ENCODE measurements at regions of chr3 and their contacts with region 1.

Region 1: DNA sequence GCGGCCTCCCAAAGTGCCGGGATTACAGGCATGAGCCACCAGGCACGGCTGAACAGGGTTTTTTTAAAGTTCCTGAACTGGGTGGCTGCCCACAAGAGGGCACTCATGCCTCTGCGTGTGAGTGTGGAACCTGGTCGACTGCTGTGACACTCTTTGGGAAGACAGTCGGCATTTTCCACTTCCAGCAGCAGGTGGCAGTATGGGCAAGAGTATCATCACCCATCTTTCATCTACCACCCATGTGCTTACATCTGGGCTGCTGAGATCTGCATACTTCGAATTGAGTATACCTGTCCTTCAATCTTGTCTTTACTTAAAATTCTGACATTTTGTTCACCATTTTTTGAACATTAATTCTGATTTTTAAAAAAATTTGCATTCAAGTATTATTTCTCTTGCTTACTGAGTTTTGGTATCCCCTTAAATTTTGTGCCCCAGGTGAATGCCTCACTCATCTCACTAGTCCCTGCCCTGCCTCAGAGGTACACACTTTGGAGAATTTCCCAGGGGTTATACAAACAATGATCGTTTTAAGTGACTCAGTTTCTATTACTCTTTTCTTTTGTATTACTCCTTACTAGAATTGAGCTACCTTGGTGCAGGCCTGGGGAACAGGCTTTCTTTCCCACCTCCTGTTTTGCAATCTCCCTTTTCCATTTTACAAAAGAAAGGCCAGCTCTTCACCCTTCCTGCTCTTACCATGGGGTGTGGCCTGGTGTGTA is 11.8 kb downstream of the CLEC3B start:
- DNase-seq: peak; percentile 92
- H3K4me3 ChIP-seq: no peak overlapping the region
- H3K27ac ChIP-seq: peak overlapping the region; percentile 33
- H3K4me1 ChIP-seq: peaks cover 21% of the 10 kb centered on the region
- H3K27me3 ChIP-seq: no peaks in the 10 kb centered on the region
- CTCF ChIP-seq: peak; percentile 98

Region 2: DNA sequence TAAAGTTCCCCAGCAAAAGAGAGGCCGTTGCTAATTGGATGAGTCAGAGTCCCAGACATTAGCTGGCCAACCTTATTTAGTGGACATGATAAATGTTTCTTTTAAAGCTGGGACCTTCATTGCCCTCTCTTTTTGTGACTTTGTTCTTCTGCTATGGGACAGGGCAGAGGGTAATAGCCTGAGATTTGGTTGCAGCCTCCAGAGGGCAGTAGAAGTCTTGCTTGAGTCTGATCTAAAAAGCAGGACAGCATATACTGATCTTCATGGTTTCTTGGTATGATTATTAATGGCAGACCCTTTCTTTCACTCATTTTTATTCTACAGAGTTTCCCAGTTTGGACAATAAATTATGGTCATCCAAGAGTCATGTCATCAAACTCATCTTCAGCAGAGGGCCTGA is 508.0 kb before region 1 on chr3:
- CTCF ChIA-PET with region 1: no interaction called
- dilution Hi-C with region 1: no loop called
- in situ Hi-C with region 1: no loop called
- intact Hi-C with region 1: loop called (anchors 1 kb)
- DNase-seq: no peak
- H3K4me3 ChIP-seq: no peak overlapping the region
- H3K27ac ChIP-seq: no peak overlapping the region
- H3K4me1 ChIP-seq: no peaks in the 10 kb centered on the region
- H3K27me3 ChIP-seq: no peaks in the 10 kb centered on the region
- CTCF ChIP-seq: peak; percentile 33 to 36

Region 3: DNA sequence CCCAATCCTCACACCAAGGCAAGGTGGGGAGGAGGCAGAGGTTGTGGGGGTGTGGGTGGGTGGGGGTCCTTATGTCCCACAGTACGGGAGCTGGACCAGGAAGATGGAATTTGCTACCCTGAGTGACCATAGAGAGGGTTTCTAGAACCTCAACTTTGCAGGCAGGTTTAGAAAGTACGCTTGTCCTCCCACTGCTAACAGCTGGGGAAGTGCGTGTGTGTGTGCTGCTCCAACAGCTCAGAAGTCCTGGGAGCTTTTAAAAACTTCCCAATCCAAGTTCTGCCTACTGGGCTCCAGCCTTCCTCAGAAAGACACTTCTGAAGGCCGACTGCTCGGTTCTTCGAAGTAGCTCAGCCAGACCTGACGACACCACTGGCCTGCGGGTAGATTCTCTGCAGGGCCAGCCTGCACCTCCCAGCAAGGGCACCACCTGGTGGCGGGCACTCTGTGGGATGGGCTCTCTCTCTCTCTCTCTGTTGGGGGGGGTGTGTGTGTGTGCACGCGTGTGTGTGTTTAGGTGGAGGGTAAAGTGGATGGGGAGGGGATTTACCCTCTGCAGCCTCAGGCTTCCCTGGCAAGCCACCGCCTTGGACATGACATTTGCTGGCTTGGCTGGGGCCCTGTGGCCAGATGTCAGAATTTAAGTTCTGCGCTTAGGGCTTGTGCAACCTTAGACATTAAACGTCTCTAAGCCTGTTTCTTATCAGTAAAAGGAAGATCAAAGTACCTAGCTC is 172.6 kb after region 1 on chr3:
- CTCF ChIA-PET with region 1: interaction called, 14 read pairs
- dilution Hi-C with region 1: loop called (anchors 5 kb)
- in situ Hi-C with region 1: loop called in 1 of 2 experiments (anchors 5 kb)
- intact Hi-C with region 1: loop called (anchors 1 kb)
- DNase-seq: peak; percentile 71
- H3K4me3 ChIP-seq: no peak overlapping the region
- H3K27ac ChIP-seq: no peak overlapping the region
- H3K4me1 ChIP-seq: peaks cover 36% of the 10 kb centered on the region
- H3K27me3 ChIP-seq: no peaks in the 10 kb centered on the region
- CTCF ChIP-seq: peak; percentile 69 to 98

Region 4: DNA sequence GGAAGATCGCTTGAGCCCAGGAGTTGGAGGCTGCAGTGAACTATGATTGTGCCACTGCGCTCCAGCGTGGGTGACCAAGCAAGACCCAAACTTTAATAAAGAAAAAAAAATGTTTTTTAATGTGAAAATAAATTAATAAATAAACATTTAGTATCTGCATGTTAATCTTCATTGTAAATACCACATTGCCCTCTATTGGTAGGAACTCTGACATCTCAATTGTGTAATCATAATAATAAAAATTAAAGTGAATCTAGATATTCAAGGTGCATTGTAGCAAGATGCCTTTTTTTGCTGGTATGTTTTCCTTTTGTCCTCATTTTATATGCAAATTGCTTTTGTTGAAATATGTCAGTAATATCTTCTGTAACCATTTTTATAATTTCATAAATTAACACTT is 461.6 kb after region 1 on chr3:
- CTCF ChIA-PET with region 1: no interaction called
- dilution Hi-C with region 1: no loop called
- in situ Hi-C with region 1: loop called (anchors 5 kb)
- intact Hi-C with region 1: loop called (anchors 1 kb)
- DNase-seq: peak; percentile 30
- H3K4me3 ChIP-seq: no peak overlapping the region
- H3K27ac ChIP-seq: no peak overlapping the region
- H3K4me1 ChIP-seq: no peaks in the 10 kb centered on the region
- H3K27me3 ChIP-seq: no peaks in the 10 kb centered on the region
- CTCF ChIP-seq: peak; percentile 51 to 53

Region 5: DNA sequence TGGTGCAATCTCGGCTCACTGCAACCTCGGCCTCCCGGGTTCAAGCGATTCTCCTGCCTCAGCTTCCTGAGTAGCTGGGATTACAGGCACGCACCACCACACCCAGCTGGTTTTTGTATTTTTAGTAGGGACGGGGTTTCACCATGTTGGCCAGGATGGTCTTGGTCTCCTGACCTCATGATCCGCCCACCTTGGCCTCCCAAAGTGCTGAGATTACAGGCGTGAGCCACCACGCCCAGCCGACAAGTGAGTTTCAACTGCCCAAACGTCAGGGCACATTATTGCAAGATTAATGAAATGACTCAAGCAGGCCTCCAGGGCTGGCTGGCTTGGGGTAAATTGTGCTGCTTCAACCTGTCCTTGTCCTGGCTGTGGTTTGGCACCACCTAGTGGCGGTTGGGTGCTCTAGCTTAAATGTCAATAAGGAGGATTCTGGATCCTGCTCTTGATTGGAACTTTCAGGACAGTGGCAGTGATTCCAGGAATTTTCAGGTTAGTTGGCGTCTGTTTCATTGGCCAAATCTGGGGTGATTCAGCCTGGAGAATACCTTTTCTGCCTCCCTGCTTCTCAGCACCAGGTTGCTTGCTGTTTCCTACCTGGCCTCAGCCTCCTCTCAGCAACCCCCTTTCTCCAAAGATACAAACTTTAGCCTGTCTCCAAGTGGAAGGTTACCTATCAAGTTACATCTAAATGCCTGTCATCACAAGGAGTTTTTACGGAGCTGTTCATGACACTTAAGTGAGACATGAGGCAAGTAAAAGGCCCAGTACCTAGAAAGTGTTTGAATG is 618.9 kb after region 1 on chr3:
- CTCF ChIA-PET with region 1: no interaction called
- dilution Hi-C with region 1: no loop called
- in situ Hi-C with region 1: loop called (anchors 10 to 25 kb)
- intact Hi-C with region 1: loop called (anchors 1 kb)
- DNase-seq: peak; percentile 91
- H3K4me3 ChIP-seq: no peak overlapping the region
- H3K27ac ChIP-seq: no peak overlapping the region
- H3K4me1 ChIP-seq: peaks cover 9% of the 10 kb centered on the region
- H3K27me3 ChIP-seq: no peaks in the 10 kb centered on the region
- CTCF ChIP-seq: peak; percentile 90 to 97

Region 6: GRCh38 chr3:45938864-45939263 is 901.0 kb after region 1 on chr3:
- CTCF ChIA-PET with region 1: no interaction called
- dilution Hi-C with region 1: no loop called
- in situ Hi-C with region 1: no loop called
- intact Hi-C with region 1: loop called (anchors 10 kb)
- DNase-seq: peak; percentile 74
- H3K4me3 ChIP-seq: no peak overlapping the region
- H3K27ac ChIP-seq: no peak overlapping the region
- H3K4me1 ChIP-seq: no peaks in the 10 kb centered on the region
- H3K27me3 ChIP-seq: no peaks in the 10 kb centered on the region
- CTCF ChIP-seq: peak; percentile 93 to 95

Measured in mammary epithelial cell (primary cell).